Activated CD8-positive, alpha-beta T cell treated with anti-CD3 and anti-CD28 coated beads, Interleukin-2, amount 10 ng/mL, durations not matched to agents 7 days and 5 days (primary cell): ENCODE measurements at regions of chr3 and their contacts with region 1.

Region 1: GRCh38 chr3:13895155-13896105 is 15.6 kb upstream of the WNT7A start:
- DNase-seq: peak; percentile 98
- ATAC-seq: peak; percentile 99
- H3K4me3 Mint-ChIP-seq: peak overlapping the region; percentile 84
- H3K27ac Mint-ChIP-seq: peak overlapping the region; percentile 81
- H3K4me1 Mint-ChIP-seq: peaks cover 33% of the 10 kb centered on the region
- H3K27me3 Mint-ChIP-seq: peaks cover 2% of the 10 kb centered on the region

Region 2: GRCh38 chr3:13884851-13885703 is 10.4 kb before region 1 on chr3:
- CTCF ChIA-PET with region 1: interaction called, 20 read pairs
- POLR2A ChIA-PET with region 1: no interaction called
- DNase-seq: peak; percentile 81
- ATAC-seq: peak; percentile 73
- H3K4me3 Mint-ChIP-seq: no peak overlapping the region
- H3K27ac Mint-ChIP-seq: no peak overlapping the region
- H3K4me1 Mint-ChIP-seq: peaks cover 6% of the 10 kb centered on the region
- H3K27me3 Mint-ChIP-seq: peaks cover 44% of the 10 kb centered on the region

Region 3: DNA sequence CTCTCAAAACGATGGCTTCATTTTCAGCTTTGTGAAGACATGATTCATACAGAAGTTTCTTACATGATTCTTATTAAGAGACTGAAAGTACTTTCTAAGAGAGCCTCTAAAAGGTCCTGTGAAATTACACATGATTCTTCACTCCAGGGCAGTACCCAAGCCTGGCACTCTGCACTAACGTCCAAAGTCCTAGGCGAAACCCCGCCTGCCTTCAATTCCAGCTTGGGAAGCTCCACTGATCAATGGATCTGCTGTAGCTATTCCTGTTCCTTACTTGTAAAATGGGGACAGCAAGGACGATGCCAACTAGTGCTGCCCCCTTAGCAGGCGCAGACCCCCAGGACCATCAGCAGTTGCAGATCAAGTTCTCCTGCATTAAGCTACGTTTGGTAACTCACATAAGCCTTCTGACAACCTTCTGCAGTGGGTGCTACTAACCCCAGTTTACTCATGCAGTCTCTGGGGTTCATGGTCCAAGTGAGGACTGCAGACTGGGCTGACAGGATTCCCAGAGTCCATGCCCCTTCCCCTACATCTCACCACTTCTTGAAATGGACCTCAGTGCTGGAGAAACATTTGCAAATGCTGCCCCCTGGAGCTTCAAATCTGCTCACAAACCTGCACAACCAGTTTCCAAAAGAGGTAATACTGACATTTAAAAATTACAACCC is 218.7 kb after region 1 on chr3:
- CTCF ChIA-PET with region 1: interaction called, 47 read pairs
- POLR2A ChIA-PET with region 1: no interaction called
- DNase-seq: no peak
- ATAC-seq: no peak
- H3K4me3 Mint-ChIP-seq: no peak overlapping the region
- H3K27ac Mint-ChIP-seq: no peak overlapping the region
- H3K4me1 Mint-ChIP-seq: no peaks in the 10 kb centered on the region
- H3K27me3 Mint-ChIP-seq: no peaks in the 10 kb centered on the region

Region 4: GRCh38 chr3:14124615-14125190 is 229.3 kb after region 1 on chr3 and contains the starts of genes CHCHD4 and TMEM43:
- CTCF ChIA-PET with region 1: interaction called, 20 read pairs
- POLR2A ChIA-PET with region 1: interaction called, 12 read pairs
- DNase-seq: peak; percentile 99
- ATAC-seq: peak; percentile 90
- H3K4me3 Mint-ChIP-seq: peak within 1 kb of the TSS; percentile 93
- H3K27ac Mint-ChIP-seq: peak within 1 kb of the TSS; percentile 90
- H3K4me1 Mint-ChIP-seq: peaks cover 61% of the 10 kb centered on the region
- H3K27me3 Mint-ChIP-seq: no peaks in the 10 kb centered on the region
- total RNA-seq, gene CHCHD4: 17.3 to 18.1 TPM
- total RNA-seq, gene TMEM43: 27.9 to 28.8 TPM